A673 (cell line): ENCODE measurements at regions of chr9 and their contacts with region 1.

Region 1: DNA sequence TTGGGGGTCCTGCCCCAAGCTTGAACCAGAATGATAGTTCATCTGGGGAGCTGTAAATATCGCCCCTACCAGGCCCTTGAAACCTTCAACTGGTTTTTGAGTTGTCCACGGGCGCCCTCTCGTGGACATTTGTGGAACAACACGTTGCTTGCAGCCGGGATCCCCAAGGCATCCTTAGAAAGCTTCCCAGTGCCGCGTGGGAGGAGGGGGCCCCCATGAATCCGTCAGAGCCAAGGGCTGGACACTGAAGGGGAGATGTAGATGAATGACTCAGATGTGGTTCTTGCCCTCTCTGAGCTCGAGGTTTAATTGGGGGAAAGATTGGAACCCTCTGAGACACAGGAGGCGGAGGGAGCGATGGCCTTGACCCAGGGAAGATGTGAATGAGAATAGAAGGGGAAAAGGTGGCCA is 31.8 kb upstream of the ORM1 start:
- DNase-seq: peak; percentile 76
- H3K4me3 ChIP-seq: no peak overlapping the region
- H3K27ac ChIP-seq: no peak overlapping the region
- H3K4me1 ChIP-seq: peaks cover 7% of the 10 kb centered on the region
- H3K27me3 ChIP-seq: no peaks in the 10 kb centered on the region
- CTCF ChIP-seq: peak; percentile 94

Region 2: GRCh38 chr9:113682297-113682771 is 608.7 kb before region 1 on chr9:
- CTCF ChIA-PET with region 1: no interaction called
- POLR2A ChIA-PET with region 1: no interaction called
- intact Hi-C with region 1: loop called (anchors 10 kb)
- DNase-seq: peak; percentile 61
- H3K4me3 ChIP-seq: no peak overlapping the region
- H3K27ac ChIP-seq: no peak overlapping the region
- H3K4me1 ChIP-seq: no peaks in the 10 kb centered on the region
- H3K27me3 ChIP-seq: peaks cover 22% of the 10 kb centered on the region
- CTCF ChIP-seq: peak; percentile 95

Region 3: GRCh38 chr9:113737517-113738271 is 553.4 kb before region 1 on chr9:
- CTCF ChIA-PET with region 1: no interaction called
- POLR2A ChIA-PET with region 1: no interaction called
- intact Hi-C with region 1: loop called (anchors 10 kb)
- DNase-seq: peak; percentile 72
- H3K4me3 ChIP-seq: no peak overlapping the region
- H3K27ac ChIP-seq: no peak overlapping the region
- H3K4me1 ChIP-seq: no peaks in the 10 kb centered on the region
- H3K27me3 ChIP-seq: no peaks in the 10 kb centered on the region
- CTCF ChIP-seq: peak; percentile 87

Region 4: GRCh38 chr9:113807173-113808061 is 483.7 kb before region 1 on chr9:
- CTCF ChIA-PET with region 1: no interaction called
- POLR2A ChIA-PET with region 1: no interaction called
- intact Hi-C with region 1: loop called (anchors 10 kb)
- DNase-seq: peak; percentile 71
- H3K4me3 ChIP-seq: peak overlapping the region; percentile 5
- H3K27ac ChIP-seq: no peak overlapping the region
- H3K4me1 ChIP-seq: peaks cover 4% of the 10 kb centered on the region
- H3K27me3 ChIP-seq: no peaks in the 10 kb centered on the region
- CTCF ChIP-seq: peak; percentile 93

Region 5: GRCh38 chr9:113913426-113914195 is 377.5 kb before region 1 on chr9:
- CTCF ChIA-PET with region 1: no interaction called
- POLR2A ChIA-PET with region 1: no interaction called
- intact Hi-C with region 1: no loop called
- DNase-seq: no peak
- H3K4me3 ChIP-seq: no peak overlapping the region
- H3K27ac ChIP-seq: no peak overlapping the region
- H3K4me1 ChIP-seq: peaks cover 12% of the 10 kb centered on the region
- H3K27me3 ChIP-seq: no peaks in the 10 kb centered on the region
- CTCF ChIP-seq: no peak

Region 6: GRCh38 chr9:114082017-114082762 is 208.9 kb before region 1 on chr9:
- CTCF ChIA-PET with region 1: interaction called, 19 read pairs
- POLR2A ChIA-PET with region 1: no interaction called
- intact Hi-C with region 1: loop called (anchors 1 kb)
- DNase-seq: peak; percentile 90
- H3K4me3 ChIP-seq: no peak overlapping the region
- H3K27ac ChIP-seq: no peak overlapping the region
- H3K4me1 ChIP-seq: no peaks in the 10 kb centered on the region
- H3K27me3 ChIP-seq: no peaks in the 10 kb centered on the region
- CTCF ChIP-seq: peak; percentile 93

Region 7: GRCh38 chr9:114108016-114108833 is 182.8 kb before region 1 on chr9:
- CTCF ChIA-PET with region 1: interaction called, 26 read pairs
- POLR2A ChIA-PET with region 1: no interaction called
- intact Hi-C with region 1: loop called (anchors 2 kb)
- DNase-seq: peak; percentile 75
- H3K4me3 ChIP-seq: no peak overlapping the region
- H3K27ac ChIP-seq: no peak overlapping the region
- H3K4me1 ChIP-seq: no peaks in the 10 kb centered on the region
- H3K27me3 ChIP-seq: peaks cover 41% of the 10 kb centered on the region
- CTCF ChIP-seq: peak; percentile 93

Region 8: DNA sequence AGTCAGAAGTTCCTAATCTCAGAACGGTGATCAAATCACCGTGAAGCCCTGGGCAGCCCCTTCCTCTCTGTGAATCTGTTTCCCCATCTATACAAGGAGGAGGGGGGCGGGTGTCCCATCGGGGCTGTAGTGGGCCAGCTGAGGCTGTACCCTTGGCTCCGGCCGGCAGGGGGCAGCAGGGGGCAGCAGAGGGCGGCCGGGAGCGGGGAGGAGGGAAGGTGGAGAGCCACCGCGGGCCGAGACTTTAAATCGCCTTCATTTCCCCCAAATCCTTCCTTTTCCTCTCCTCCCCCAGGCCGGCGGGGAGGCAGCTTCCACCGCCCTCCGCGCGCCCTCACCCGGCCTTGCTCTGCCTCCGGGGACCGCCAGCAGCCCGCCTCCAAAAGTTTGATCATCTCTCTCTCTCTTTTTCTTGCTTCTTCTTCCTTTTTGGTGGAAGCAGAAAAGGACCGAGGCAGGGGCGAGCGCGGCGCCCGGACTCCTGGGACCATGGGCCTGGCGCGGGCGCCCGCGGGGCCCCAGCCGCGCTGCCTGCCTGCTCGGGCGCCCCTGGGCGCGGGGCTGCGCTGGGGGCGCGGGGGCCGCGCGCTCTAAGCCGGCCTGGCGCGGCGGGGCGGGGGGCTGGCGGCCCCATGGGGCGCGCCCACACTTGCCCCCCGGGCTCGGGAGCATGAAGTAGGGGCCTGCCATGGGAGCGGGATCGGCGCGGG is 135.7 kb before region 1 on chr9 and contains the start of gene COL27A1:
- CTCF ChIA-PET with region 1: interaction called, 7 read pairs
- POLR2A ChIA-PET with region 1: no interaction called
- intact Hi-C with region 1: loop called (anchors 2 kb)
- DNase-seq: peak; percentile 91
- H3K4me3 ChIP-seq: peak within 1 kb of the TSS; percentile 72
- H3K27ac ChIP-seq: peak within 1 kb of the TSS; percentile 67
- H3K4me1 ChIP-seq: peaks cover 10% of the 10 kb centered on the region
- H3K27me3 ChIP-seq: peaks cover 20% of the 10 kb centered on the region
- CTCF ChIP-seq: peak; percentile 97
- total RNA-seq, gene COL27A1: 37.0 and 37.6 TPM in 2 replicates